ENCODE measurements at regions of chr3 and their contacts with region 1.

Region 1: GRCh38 chr3:155131104-155131503 is 51.0 kb downstream of the MME start:
- DNase-seq: no peak
- H3K4me3 ChIP-seq: no peak overlapping the region
- H3K27ac ChIP-seq: peak overlapping the region; percentile 68 to 74
- H3K4me1 ChIP-seq: no peaks in the 10 kb centered on the region
- H3K27me3 ChIP-seq: no peaks in the 10 kb centered on the region
- CTCF ChIP-seq: no peak
- POLR2A ChIP-seq: no peak

Region 2: DNA sequence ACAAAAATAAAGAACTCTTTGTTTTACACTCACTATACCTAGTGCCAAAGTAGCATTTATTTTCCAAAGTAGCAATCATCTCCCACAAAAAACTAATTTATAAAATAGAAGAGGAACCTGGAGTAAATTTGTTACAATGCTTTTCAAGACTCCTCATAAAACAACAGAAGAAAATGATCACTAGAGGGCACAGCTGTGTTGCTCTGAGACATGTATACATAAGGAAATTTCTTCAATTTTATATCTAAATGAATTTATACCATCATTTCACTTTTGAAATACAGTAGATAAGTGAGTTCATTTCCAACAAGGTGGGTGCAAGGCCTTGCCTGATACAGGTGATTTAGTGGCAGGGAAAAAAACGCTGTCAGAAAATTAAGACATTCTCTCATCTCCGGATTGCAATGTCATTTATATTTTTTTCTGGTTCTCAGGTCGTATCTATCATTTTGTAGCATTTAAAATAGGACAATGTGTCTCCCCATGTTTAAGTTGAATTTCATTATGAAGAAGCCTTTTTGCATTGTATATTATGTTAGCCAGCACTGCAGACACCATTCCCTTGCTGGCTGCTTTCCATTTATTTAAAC is 1035.2 kb before region 1 on chr3:
- intact Hi-C with region 1: no loop called
- DNase-seq: no peak
- H3K4me3 ChIP-seq: no peak overlapping the region
- H3K27ac ChIP-seq: no peak overlapping the region
- H3K4me1 ChIP-seq: no peaks in the 10 kb centered on the region
- H3K27me3 ChIP-seq: no peaks in the 10 kb centered on the region
- CTCF ChIP-seq: peak in 1 of 3 donors; percentile 32
- POLR2A ChIP-seq: no peak

Region 3: DNA sequence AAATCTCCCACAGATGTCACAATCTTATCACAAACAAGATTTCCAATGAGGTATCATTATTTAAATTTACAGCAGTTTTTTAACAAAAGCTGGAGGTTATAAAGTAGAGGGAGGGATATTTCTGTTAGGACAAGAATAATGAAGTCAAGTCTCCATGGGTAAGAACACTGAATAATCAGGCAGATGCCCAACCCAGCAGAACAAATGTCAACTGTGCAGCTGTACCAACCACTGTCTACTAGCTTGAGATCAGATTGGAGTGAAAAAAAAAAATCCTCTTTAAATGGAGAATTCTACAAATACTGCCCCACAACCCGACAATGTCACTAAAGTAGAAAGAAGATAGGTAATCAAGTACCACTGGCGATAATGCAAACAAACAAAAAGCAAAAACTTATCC is 837.1 kb before region 1 on chr3:
- intact Hi-C with region 1: no loop called
- DNase-seq: no peak
- H3K4me3 ChIP-seq: no peak overlapping the region
- H3K27ac ChIP-seq: no peak overlapping the region
- H3K4me1 ChIP-seq: no peaks in the 10 kb centered on the region
- H3K27me3 ChIP-seq: no peaks in the 10 kb centered on the region
- CTCF ChIP-seq: no peak
- POLR2A ChIP-seq: no peak

Region 4: GRCh38 chr3:154310840-154311239 is 820.3 kb before region 1 on chr3:
- intact Hi-C with region 1: loop called (anchors 10 kb)
- DNase-seq: no peak
- H3K4me3 ChIP-seq: no peak overlapping the region
- H3K27ac ChIP-seq: no peak overlapping the region
- H3K4me1 ChIP-seq: no peaks in the 10 kb centered on the region
- H3K27me3 ChIP-seq: no peaks in the 10 kb centered on the region
- CTCF ChIP-seq: no peak
- POLR2A ChIP-seq: no peak

Region 5: GRCh38 chr3:154684021-154684420 is 447.1 kb before region 1 on chr3:
- intact Hi-C with region 1: loop called (anchors 10 kb)
- DNase-seq: no peak
- H3K4me3 ChIP-seq: no peak overlapping the region
- H3K27ac ChIP-seq: no peak overlapping the region
- H3K4me1 ChIP-seq: no peaks in the 10 kb centered on the region
- H3K27me3 ChIP-seq: no peaks in the 10 kb centered on the region
- CTCF ChIP-seq: no peak
- POLR2A ChIP-seq: no peak

Region 6: DNA sequence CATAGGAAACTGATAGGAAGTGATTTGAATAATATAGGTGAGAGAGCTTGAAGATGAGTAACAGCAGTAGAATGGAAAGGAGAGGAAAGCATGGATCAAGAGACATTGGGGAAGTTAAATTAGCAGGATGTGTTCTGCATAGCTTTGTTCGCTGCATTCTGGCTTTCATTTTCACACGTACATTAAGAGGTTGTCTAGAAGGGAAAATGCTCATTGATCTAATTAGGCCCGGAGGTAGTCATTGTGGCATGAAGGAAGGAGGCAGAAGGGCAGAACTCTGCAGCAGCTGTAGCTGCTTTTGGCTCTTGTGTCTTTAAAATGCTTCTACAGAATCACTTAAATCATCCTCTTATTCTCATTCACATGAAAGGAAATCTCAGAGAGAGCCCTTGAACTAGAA is 1029.5 kb after region 1 on chr3:
- intact Hi-C with region 1: no loop called
- DNase-seq: no peak
- H3K4me3 ChIP-seq: no peak overlapping the region
- H3K27ac ChIP-seq: no peak overlapping the region
- H3K4me1 ChIP-seq: no peaks in the 10 kb centered on the region
- H3K27me3 ChIP-seq: no peaks in the 10 kb centered on the region
- CTCF ChIP-seq: no peak
- POLR2A ChIP-seq: no peak